Lower leg skin (tissue), 4 donors: ENCODE measurements at regions of chr2 and their contacts with region 1.

Region 1: GRCh38 chr2:208906330-208906729 is 499.7 kb downstream of the PTH2R start:
- DNase-seq: no peak
- H3K4me3 ChIP-seq: no peak overlapping the region
- CTCF ChIP-seq: no peak
- POLR2A ChIP-seq: no peak

Region 2: GRCh38 chr2:208489687-208490086 is 416.6 kb before region 1 on chr2:
- intact Hi-C with region 1: loop called (anchors 5 kb)
- DNase-seq: no peak
- H3K4me3 ChIP-seq: no peak overlapping the region
- CTCF ChIP-seq: no peak
- POLR2A ChIP-seq: no peak

Region 3: DNA sequence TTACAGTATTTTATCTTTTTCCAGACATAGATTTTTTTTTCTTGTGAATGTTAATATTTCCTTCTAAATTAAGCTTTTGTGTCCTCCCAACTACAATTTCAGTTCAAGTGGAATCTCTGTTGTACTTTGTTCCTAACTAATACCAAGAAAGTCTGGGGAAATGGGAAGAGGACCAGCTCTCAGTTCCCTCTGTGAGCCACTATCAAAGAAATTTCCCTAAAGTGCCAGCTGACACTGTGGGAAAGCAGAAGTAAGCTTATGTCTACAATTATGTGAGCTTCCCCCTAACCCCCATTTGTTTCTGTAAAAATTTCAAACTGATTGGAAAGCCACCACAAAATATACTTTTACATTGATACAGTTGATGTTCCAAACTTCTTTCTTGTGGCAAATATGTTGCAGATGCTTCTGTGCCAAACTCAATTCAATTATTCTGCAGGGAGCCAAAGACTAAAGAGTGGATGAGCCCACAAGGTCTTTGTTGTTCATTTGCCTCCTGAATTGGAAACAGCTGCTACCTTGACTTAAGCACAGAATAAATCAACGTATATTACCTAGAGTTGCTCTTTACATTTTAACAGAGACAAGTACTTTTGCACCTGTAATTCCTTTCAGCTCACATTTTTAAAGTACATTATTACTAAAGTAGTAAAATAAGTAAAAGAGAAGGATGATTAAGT is 193.1 kb before region 1 on chr2:
- intact Hi-C with region 1: no loop called
- DNase-seq: no peak
- H3K4me3 ChIP-seq: no peak overlapping the region
- CTCF ChIP-seq: no peak
- POLR2A ChIP-seq: no peak